Body of pancreas (tissue), 4 donors: ENCODE measurements at regions of chr1 and their contacts with region 1.

Region 1: GRCh38 chr1:116679091-116679827 is 11.7 kb upstream of the IGSF3 start:
- DNase-seq: no peak
- ATAC-seq: no peak
- H3K4me3 ChIP-seq: no peak overlapping the region
- H3K27ac ChIP-seq: no peak overlapping the region
- H3K4me1 ChIP-seq: no peaks in the 10 kb centered on the region
- H3K27me3 ChIP-seq: no peaks in the 10 kb centered on the region
- CTCF ChIP-seq: no peak
- POLR2A ChIP-seq: no peak

Region 2: DNA sequence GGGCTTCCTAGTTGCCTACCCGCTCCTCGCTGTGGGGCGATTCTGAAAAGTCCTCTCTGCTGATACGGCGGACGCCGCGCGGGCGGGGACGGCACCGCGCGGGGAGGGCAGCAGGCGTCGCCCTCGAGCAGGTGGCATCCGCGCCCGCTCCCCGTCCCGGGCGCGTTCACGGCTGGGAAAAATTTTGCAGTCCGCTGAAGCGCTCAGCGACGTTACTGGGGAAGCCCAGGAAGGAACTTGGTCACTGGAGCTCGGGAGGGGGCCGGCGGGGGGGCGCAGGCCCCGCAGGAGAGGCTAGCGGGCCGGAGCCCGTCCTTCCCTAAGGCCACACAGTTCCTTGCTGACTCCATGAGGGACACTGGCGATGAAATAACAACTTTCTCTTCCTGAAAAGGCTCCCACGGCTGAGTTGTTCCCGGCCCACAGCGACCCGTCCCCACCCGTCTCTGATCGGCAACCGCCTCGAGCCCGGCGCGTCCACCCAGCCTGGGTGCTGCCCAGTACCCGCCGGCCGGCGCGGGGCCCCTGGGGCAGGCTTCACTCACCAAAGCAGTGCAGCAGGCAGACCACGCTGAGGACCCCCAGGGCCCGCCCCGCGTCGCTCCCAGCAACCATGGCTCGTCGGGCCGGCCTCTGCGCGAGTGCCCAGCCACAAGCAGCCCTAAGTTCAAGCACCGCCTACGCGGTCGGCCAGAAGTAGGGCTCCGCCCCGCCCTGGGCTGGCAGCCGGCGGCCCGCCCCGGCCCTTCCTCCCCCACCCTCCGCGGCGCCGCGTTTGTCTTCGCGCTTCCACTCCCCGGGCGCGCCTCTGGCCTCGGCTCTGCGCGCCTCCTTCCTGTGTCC is 108.7 kb before region 1 on chr1 and contains the start of gene CD58:
- intact Hi-C with region 1: loop called (anchors 10 kb)
- DNase-seq: peak; percentile 76 to 87 (median 82)
- ATAC-seq: peak; percentile 87
- H3K4me3 ChIP-seq: peak within 1 kb of the TSS; percentile 48 to 50
- H3K27ac ChIP-seq: peak within 1 kb of the TSS; percentile 84 to 94 (median 92)
- H3K4me1 ChIP-seq: peaks cover 11% of the 10 kb centered on the region
- H3K27me3 ChIP-seq: no peaks in the 10 kb centered on the region
- CTCF ChIP-seq: peak; percentile 46 to 78 (median 67)
- POLR2A ChIP-seq: peak; percentile 52 to 74 (median 68)
- total RNA-seq, gene CD58: 6.6 to 15.0 TPM